Natural killer cell (primary cell): ENCODE measurements at regions of chr11 and their contacts with region 1.

Region 1: DNA sequence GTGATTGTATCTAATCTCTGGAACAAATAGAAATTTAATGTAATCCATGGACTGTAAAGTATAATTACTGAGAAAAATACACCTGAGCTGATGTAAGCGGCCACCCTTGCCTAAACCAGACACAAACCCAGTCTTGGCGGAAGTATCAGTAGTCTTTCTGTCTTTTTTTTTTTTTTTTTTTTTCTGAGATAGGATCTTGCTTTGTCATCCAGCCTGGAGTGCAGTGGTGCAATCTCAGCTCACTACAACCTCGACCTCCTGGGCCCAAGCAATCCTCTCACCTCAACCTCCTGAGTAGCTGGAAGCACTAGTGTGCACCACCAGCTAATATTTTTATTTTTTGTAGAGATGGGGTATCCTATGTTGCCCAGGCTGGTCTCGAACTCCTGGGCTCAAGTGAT is 5.5 kb upstream of the CXCR5 start:
- DNase-seq: peak in 1 of 2 donors; percentile 72
- ATAC-seq: no peak
- H3K4me3 ChIP-seq: no peak overlapping the region
- H3K4me3 Mint-ChIP-seq: no peak overlapping the region
- H3K27ac ChIP-seq: peak overlapping the region; percentile 81
- H3K27ac Mint-ChIP-seq: peak overlapping the region in 1 of 2 donors; percentile 99
- H3K4me1 ChIP-seq: peaks cover 60% of the 10 kb centered on the region
- H3K4me1 Mint-ChIP-seq: peaks cover 37 to 64% of the 10 kb centered on the region in 2 donors
- H3K27me3 ChIP-seq: no peaks in the 10 kb centered on the region
- H3K27me3 Mint-ChIP-seq: no peaks in the 10 kb centered on the region
- CTCF ChIP-seq: no peak

Region 2: GRCh38 chr11:118699506-118700220 is 178.5 kb before region 1 on chr11:
- intact Hi-C with region 1: loop called (anchors 2 kb)
- DNase-seq: peak; percentile 69 to 94
- ATAC-seq: peak; percentile 90 to 97 (median 91)
- H3K4me3 ChIP-seq: no peak overlapping the region
- H3K4me3 Mint-ChIP-seq: peak overlapping the region; percentile 78
- H3K27ac ChIP-seq: peak overlapping the region; percentile 81
- H3K27ac Mint-ChIP-seq: peak overlapping the region; percentile 88 to 94
- H3K4me1 ChIP-seq: peaks cover 59% of the 10 kb centered on the region
- H3K4me1 Mint-ChIP-seq: peaks cover 17 to 28% of the 10 kb centered on the region in 2 donors
- H3K27me3 ChIP-seq: no peaks in the 10 kb centered on the region
- H3K27me3 Mint-ChIP-seq: no peaks in the 10 kb centered on the region
- CTCF ChIP-seq: no peak

Region 3: DNA sequence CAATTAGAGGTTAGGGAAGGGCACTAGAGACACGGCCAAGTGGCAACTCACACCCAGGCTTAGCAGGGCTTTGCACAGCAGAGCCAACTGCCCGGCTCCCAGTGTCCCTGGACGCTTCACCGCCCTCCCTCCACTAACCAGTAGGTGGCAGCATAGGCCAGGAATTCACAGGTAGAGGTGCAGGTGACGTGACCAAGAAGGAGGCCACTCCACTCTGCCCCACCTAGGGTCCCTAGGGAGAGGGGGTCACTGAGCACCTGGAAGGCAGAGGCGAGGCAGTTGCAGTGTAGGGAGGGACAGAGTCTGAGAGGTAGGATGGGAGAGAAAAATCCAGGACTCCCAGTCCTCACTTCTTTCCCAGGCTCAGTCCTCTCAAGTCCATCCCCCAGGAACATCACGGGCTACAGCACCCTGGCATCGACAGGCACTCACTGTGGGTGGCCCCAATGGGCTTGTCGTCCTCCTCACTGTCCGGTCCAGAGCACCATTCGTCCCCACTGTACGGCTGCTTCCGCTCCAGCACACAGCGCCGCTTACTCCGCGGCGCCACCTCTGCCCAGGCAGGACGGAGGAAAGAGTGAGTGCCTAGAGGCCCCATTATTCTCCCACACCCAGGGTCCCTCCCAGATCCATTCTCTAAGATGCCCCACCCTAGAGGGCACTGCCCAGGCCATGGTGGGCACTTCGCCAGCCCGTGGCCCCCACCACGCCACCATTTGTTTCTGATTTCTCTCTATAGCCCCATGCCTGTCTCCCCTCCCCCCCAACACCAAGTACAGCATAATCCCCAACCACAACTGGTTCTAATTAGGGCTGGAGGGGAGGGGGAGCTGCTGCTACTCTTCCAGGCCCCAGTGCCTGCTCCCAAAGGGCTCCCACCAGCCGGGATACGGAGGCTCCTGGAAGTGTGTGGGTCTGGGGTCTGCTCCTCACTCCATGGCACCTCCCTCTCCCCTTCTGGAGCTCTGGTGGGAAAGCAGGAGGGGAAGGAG is 29.2 kb after region 1 on chr11:
- intact Hi-C with region 1: loop called (anchors 2 kb)
- DNase-seq: peak; percentile 84 to 92
- ATAC-seq: peak; percentile 48 to 80 (median 61)
- H3K4me3 ChIP-seq: no peak overlapping the region
- H3K4me3 Mint-ChIP-seq: peak overlapping the region; percentile 6
- H3K27ac ChIP-seq: peak overlapping the region; percentile 56
- H3K27ac Mint-ChIP-seq: peak overlapping the region; percentile 86 to 90
- H3K4me1 ChIP-seq: peaks cover 48% of the 10 kb centered on the region
- H3K4me1 Mint-ChIP-seq: peaks cover 38 to 51% of the 10 kb centered on the region in 2 donors
- H3K27me3 ChIP-seq: no peaks in the 10 kb centered on the region
- H3K27me3 Mint-ChIP-seq: no peaks in the 10 kb centered on the region
- CTCF ChIP-seq: peak; percentile 79